Mammary epithelial cell (primary cell): ENCODE measurements at regions of chr10 and their contacts with region 1.

Region 1: DNA sequence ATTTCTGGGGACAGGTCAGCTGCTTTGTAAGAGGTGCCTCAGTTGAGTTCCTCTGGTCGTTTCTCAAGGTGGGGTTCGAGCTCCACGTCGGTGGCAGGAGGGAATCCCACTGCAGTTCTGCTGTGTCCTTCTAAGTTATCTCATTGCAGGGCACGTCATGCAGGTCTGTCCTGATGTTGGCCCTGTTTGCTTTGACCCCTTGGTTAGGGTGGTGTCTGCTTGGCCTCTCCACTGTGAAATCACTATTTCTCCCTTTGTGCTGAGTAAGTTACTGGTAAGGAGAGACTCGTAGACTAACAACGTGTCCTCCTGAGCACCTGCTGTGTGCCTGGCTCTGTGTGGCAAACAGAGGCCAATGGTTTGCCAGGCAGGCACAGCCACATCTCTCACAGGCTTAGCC is 372.9 kb upstream of the ZMIZ1 start:
- DNase-seq: no peak
- H3K4me3 ChIP-seq: no peak overlapping the region
- H3K27ac ChIP-seq: no peak overlapping the region
- H3K4me1 ChIP-seq: no peaks in the 10 kb centered on the region
- H3K27me3 ChIP-seq: peaks cover 2% of the 10 kb centered on the region
- CTCF ChIP-seq: no peak

Region 2: DNA sequence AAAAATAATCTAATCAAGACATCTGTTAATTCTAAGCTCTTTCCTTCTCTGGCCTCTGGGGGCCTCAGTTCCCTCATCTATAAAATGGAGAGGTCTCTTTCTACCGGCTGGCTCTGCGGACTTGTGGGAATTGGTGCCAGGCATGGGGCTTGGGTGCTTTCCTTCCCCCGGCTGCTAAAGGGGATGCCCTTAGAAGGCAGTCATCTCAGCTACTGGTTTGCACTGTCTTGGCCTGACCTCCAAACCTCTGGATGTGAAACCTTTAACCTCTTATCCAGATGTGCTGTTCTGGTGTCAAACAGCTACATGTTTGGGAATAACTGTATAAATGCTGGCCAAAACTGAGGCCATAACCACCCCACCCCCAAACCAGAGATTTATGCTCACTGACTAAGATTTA is 342.2 kb before region 1 on chr10:
- CTCF ChIA-PET with region 1: interaction called, 44 read pairs
- dilution Hi-C with region 1: no loop called
- in situ Hi-C with region 1: no loop called
- intact Hi-C with region 1: no loop called
- DNase-seq: no peak
- H3K4me3 ChIP-seq: no peak overlapping the region
- H3K27ac ChIP-seq: no peak overlapping the region
- H3K4me1 ChIP-seq: no peaks in the 10 kb centered on the region
- H3K27me3 ChIP-seq: no peaks in the 10 kb centered on the region
- CTCF ChIP-seq: no peak

Region 3: GRCh38 chr10:78756604-78757349 is 60.9 kb after region 1 on chr10:
- CTCF ChIA-PET with region 1: no interaction called
- dilution Hi-C with region 1: no loop called
- in situ Hi-C with region 1: no loop called
- intact Hi-C with region 1: no loop called
- DNase-seq: peak; percentile 97
- H3K4me3 ChIP-seq: no peak overlapping the region
- H3K27ac ChIP-seq: no peak overlapping the region
- H3K4me1 ChIP-seq: peaks cover 17% of the 10 kb centered on the region
- H3K27me3 ChIP-seq: no peaks in the 10 kb centered on the region
- CTCF ChIP-seq: no peak